ENCODE measurements at regions of chr6 and their contacts with region 1.

Region 1: DNA sequence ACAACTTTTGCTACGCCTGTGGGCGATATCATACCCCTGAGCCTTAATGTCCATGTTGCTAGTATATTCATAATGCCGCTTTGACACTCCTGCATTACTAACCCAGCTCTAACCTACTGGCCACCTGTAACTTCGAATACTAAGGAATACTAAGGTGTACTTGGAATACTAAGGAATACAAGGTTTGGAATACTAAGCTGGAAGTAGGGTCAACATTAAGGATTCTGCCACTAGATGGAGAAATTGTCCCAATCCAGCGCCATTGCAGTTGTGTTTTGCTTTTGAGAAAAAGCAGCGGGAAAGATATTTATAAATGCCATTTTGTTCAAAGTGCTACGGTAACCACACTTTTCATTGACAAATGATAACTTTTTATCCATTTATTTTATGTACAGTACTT is 10.7 kb downstream of the TBXT start:
- DNase-seq: no peak
- H3K4me3 ChIP-seq: no peak overlapping the region
- H3K27ac ChIP-seq: no peak overlapping the region
- H3K4me1 ChIP-seq: no peaks in the 10 kb centered on the region
- H3K27me3 ChIP-seq: peaks cover 0 to 2% (median under 1%) of the 10 kb centered on the region in 4 experiments; a peak in 3 of 7 replicates
- CTCF ChIP-seq: peak in 2 of 3 experiments; percentile 35 to 51; a peak in 3 of 4 replicates
- EP300 ChIP-seq: no peak
- POLR2A ChIP-seq: no peak
- RAD21 ChIP-seq: peak; percentile 67 to 72

Region 2: GRCh38 chr6:165900970-165901369 is 256.0 kb before region 1 on chr6:
- CTCF ChIA-PET with region 1: no interaction called
- POLR2A ChIA-PET with region 1: no interaction called
- DNase-seq: no peak
- H3K4me3 ChIP-seq: no peak overlapping the region
- H3K27ac ChIP-seq: no peak overlapping the region
- H3K4me1 ChIP-seq: no peaks in the 10 kb centered on the region
- H3K27me3 ChIP-seq: no peaks in the 10 kb centered on the region
- CTCF ChIP-seq: no peak
- EP300 ChIP-seq: no peak
- POLR2A ChIP-seq: no peak
- RAD21 ChIP-seq: no peak

Region 3: DNA sequence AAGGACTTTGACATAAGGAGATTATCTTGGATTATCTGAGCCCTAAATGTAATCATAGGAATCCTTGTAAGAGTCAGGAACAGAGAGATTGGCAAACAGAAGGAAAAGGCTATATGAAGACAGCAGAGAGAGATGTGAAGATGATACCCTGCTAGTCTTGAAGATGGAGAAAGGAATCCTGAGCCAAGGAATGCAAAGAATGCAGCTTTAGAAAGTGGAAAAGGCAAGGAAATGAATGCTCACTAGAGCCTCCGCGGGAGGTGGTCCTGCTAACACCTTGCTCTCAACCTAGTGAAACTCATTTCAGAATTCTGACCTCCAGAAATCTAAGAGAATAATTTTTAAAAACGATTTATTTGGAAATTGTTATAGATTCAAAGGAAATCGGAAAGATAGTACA is 106.4 kb before region 1 on chr6:
- CTCF ChIA-PET with region 1: no interaction called
- POLR2A ChIA-PET with region 1: no interaction called
- DNase-seq: no peak
- H3K4me3 ChIP-seq: peak overlapping the region in 1 of 4 experiments; percentile 16; a peak in 1 of 8 replicates
- H3K27ac ChIP-seq: no peak overlapping the region
- H3K4me1 ChIP-seq: peaks cover 0 to 6% (median 0%) of the 10 kb centered on the region in 4 experiments; a peak in 1 of 7 replicates
- H3K27me3 ChIP-seq: no peaks in the 10 kb centered on the region
- CTCF ChIP-seq: no peak
- EP300 ChIP-seq: no peak
- POLR2A ChIP-seq: no peak
- RAD21 ChIP-seq: no peak

Region 4: DNA sequence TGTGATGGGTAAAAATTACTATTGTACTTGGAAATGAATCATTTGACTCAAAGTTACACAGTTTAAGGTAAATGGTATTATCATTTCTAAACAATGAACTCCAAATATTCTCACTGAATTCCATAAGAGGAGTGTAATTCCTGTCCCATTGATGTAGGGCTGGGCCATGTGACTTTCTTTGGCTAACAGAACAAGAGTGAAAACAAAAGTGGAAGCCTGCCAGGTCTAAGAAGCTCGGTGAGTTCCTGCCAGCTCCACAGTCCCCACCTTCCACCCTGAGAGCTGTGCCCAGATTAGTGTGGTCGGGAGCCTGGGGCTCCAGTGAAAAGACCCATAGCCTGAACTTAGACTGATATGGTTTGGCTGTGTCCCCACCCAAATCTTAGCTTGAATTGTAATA is 13.9 kb before region 1 on chr6:
- CTCF ChIA-PET with region 1: interaction called, 30 read pairs
- POLR2A ChIA-PET with region 1: no interaction called
- DNase-seq: no peak
- H3K4me3 ChIP-seq: no peak overlapping the region
- H3K27ac ChIP-seq: no peak overlapping the region
- H3K4me1 ChIP-seq: no peaks in the 10 kb centered on the region; a peak in 1 of 7 replicates
- H3K27me3 ChIP-seq: no peaks in the 10 kb centered on the region; a peak in 1 of 7 replicates
- CTCF ChIP-seq: no peak
- EP300 ChIP-seq: no peak
- POLR2A ChIP-seq: no peak
- RAD21 ChIP-seq: no peak

Region 5: DNA sequence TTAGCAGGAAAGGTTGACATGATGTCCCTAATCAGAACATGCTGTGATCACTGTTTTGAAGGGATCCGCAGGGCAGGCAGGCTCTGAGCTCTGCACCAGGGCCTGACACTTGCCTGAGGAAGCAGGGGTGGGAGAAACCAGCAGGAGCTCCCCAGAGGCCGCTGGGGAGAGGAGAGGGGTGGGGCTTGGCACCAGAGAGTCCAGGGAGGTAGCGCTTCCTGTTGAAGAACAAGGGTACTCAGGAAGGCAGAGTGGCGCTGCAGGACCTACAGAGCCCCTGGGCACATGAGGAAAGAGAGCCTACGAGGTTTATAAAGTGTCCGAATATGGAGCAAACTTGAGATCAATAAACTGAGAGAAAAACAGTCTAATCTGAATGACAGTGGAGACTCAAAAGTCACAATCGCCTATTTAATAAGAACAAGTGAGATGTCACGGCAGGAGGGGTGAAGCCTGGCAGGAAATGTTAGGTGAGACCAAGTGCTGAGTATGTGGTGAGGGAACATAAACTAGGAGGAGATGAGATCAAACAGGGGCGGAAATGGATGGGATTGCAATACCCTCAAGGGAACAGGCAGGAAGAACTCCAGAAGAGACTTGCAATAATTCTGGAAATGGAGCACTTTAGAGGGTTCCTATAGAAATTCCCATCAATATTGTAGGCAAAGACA is 16.5 kb after region 1 on chr6:
- CTCF ChIA-PET with region 1: no interaction called
- POLR2A ChIA-PET with region 1: no interaction called
- DNase-seq: no peak
- H3K4me3 ChIP-seq: peak overlapping the region in 2 of 4 experiments; percentile 3 to 41; a peak in 3 of 8 replicates
- H3K27ac ChIP-seq: no peak overlapping the region
- H3K4me1 ChIP-seq: peaks cover 3 to 19% (median 12%) of the 10 kb centered on the region in 4 experiments
- H3K27me3 ChIP-seq: peaks cover 32 to 60% (median 52%) of the 10 kb centered on the region in 4 experiments
- CTCF ChIP-seq: no peak
- EP300 ChIP-seq: no peak
- POLR2A ChIP-seq: no peak
- RAD21 ChIP-seq: peak in 1 of 2 experiments; percentile 20; a peak in 1 of 4 replicates

Region 6: GRCh38 chr6:167699141-167699931 is 1542.4 kb after region 1 on chr6:
- CTCF ChIA-PET with region 1: no interaction called
- POLR2A ChIA-PET with region 1: no interaction called
- DNase-seq: no peak
- H3K4me3 ChIP-seq: no peak overlapping the region
- H3K27ac ChIP-seq: no peak overlapping the region
- H3K4me1 ChIP-seq: peaks cover 0 to 6% (median 3%) of the 10 kb centered on the region in 4 experiments; a peak in 3 of 7 replicates
- H3K27me3 ChIP-seq: no peaks in the 10 kb centered on the region
- CTCF ChIP-seq: no peak
- EP300 ChIP-seq: no peak
- POLR2A ChIP-seq: no peak
- RAD21 ChIP-seq: no peak